Activated CD8-positive, alpha-beta T cell treated with anti-CD3 and anti-CD28 coated beads for 36 hours (primary cell): ENCODE measurements at regions of chr9 and their contacts with region 1.

Region 1: DNA sequence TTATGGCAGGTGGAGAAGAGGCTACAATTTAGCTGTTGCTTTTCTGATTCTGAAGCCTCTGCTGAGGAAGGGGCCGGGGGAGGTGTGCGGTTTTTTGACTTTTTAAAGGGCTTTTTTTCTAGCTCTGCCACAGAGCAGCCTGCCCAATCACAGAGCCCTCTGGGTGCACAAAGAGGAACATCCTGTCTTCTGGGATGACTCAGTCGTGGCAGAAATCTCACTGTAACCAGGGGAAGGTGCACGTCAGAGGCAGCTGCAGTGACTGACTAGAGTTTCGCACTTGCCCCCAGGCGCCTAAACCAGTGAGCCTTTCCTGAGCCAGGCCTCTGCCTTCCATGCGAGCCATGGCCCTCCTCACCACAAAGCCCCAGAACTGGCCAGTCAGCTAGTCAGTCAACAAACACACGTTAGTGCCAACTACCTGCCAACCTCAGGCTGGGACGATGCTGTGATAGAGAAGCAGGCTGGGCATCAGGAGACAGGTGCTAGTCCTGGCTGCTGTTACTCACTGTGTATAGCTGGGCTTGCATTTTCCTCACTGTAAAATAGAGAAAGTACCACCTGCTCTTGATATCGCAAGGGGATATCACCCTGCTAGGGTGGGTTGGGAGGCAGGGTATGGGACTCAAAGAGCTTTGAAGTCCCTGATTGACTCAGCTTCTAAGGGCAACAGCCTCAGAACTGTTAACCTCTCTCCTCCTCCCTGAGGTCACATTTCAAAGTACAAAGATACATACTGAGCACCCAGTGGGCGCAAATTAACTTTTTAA is 2.2 kb downstream of the AKNA start:
- DNase-seq: peak; percentile 96
- ATAC-seq: peak; percentile 74
- H3K4me3 Mint-ChIP-seq: peak overlapping the region; percentile 84
- H3K27ac Mint-ChIP-seq: peak overlapping the region; percentile 94
- H3K4me1 Mint-ChIP-seq: peaks cover 34% of the 10 kb centered on the region
- H3K27me3 Mint-ChIP-seq: no peaks in the 10 kb centered on the region
- CTCF ChIP-seq: no peak

Region 2: DNA sequence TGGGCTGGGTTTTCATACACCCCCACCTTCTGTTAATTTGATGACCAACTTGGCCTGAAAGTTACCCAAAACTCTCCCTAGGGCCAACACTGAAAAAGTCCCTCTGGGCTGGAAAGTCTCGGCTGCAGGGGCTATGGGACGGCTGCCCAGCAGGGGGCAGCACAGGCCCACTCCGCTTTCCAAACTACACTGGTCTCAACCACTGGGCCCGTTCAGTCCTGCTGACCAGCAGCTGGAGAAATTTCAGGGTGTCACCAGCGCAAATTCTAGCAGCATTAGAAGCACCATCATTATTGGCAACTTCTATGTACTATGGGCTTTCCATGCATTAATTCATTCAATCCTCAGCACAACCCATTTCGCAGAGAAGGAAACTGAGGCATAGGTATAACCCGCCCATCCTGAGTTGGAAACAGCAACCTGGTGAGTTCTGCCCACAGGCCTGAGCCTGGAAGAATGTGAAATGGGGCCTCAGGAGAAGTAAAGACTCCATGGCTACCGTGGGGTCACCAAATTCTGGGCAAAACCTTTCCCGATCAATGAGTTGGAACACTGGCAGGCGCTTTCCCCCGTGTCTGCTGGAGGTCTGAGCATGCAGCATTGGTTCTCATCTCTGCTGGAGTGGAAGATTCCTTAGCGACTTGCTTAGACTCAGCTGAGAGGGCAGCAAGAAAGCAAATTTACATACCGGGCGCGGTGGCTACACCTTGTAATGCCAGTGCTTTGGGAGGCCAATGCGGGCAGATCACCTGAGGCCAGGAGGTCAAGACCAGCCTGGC is 46.3 kb before region 1 on chr9:
- CTCF ChIA-PET with region 1: interaction called, 98 read pairs
- POLR2A ChIA-PET with region 1: interaction called, 277 read pairs
- intact Hi-C with region 1: no loop called
- DNase-seq: peak; percentile 71
- ATAC-seq: peak; percentile 70
- H3K4me3 Mint-ChIP-seq: no peak overlapping the region
- H3K27ac Mint-ChIP-seq: peak overlapping the region; percentile 49
- H3K4me1 Mint-ChIP-seq: peaks cover 34% of the 10 kb centered on the region
- H3K27me3 Mint-ChIP-seq: no peaks in the 10 kb centered on the region
- CTCF ChIP-seq: peak; percentile 84

Region 3: GRCh38 chr9:114348906-114349482 is 36.6 kb before region 1 on chr9:
- CTCF ChIA-PET with region 1: interaction called, 98 read pairs
- POLR2A ChIA-PET with region 1: interaction called, 277 read pairs
- intact Hi-C with region 1: loop called (anchors 2 kb)
- DNase-seq: peak; percentile 99
- ATAC-seq: peak; percentile 89
- H3K4me3 Mint-ChIP-seq: peak overlapping the region; percentile 66
- H3K27ac Mint-ChIP-seq: peak overlapping the region; percentile 100
- H3K4me1 Mint-ChIP-seq: peaks cover 66% of the 10 kb centered on the region
- H3K27me3 Mint-ChIP-seq: no peaks in the 10 kb centered on the region
- CTCF ChIP-seq: no peak

Region 4: GRCh38 chr9:114366334-114367128 is 19.1 kb before region 1 on chr9:
- CTCF ChIA-PET with region 1: interaction called, 72 read pairs
- POLR2A ChIA-PET with region 1: interaction called, 351 read pairs
- intact Hi-C with region 1: no loop called
- DNase-seq: peak; percentile 59
- ATAC-seq: peak; percentile 50
- H3K4me3 Mint-ChIP-seq: peak overlapping the region; percentile 38
- H3K27ac Mint-ChIP-seq: peak overlapping the region; percentile 93
- H3K4me1 Mint-ChIP-seq: peaks cover 86% of the 10 kb centered on the region
- H3K27me3 Mint-ChIP-seq: no peaks in the 10 kb centered on the region
- CTCF ChIP-seq: no peak

Region 5: DNA sequence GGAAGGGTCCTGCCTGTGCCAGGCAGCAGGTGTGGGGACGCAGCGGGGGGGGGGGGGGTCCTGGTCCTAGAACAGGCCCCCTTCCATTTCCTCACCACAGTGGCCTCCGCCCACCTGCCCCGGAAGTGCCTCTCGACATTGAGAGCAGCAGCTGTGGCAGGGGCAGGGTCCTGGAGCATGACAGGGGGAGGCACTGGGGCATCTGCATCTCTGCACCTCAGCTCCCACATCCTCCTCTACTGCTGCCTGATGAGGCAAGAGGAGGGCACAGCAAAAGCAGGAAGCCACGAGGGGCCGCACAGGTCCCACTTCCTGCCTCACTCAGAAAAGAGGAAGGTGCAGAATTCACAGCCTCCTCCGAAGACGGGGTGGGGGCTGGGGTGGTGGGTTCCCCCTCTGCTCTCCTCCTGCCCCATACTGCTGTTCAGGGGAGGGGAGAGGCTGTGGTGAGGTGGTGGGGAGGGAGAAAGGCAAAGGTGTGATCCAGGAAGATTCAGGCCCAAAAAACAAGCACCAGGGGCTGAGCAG is 12.6 kb before region 1 on chr9:
- CTCF ChIA-PET with region 1: interaction called, 72 read pairs
- POLR2A ChIA-PET with region 1: interaction called, 351 read pairs
- intact Hi-C with region 1: loop called (anchors 2 kb)
- DNase-seq: peak; percentile 96
- ATAC-seq: peak; percentile 84
- H3K4me3 Mint-ChIP-seq: peak overlapping the region; percentile 72
- H3K27ac Mint-ChIP-seq: peak overlapping the region; percentile 89
- H3K4me1 Mint-ChIP-seq: peaks cover 90% of the 10 kb centered on the region
- H3K27me3 Mint-ChIP-seq: no peaks in the 10 kb centered on the region
- CTCF ChIP-seq: no peak

Region 6: DNA sequence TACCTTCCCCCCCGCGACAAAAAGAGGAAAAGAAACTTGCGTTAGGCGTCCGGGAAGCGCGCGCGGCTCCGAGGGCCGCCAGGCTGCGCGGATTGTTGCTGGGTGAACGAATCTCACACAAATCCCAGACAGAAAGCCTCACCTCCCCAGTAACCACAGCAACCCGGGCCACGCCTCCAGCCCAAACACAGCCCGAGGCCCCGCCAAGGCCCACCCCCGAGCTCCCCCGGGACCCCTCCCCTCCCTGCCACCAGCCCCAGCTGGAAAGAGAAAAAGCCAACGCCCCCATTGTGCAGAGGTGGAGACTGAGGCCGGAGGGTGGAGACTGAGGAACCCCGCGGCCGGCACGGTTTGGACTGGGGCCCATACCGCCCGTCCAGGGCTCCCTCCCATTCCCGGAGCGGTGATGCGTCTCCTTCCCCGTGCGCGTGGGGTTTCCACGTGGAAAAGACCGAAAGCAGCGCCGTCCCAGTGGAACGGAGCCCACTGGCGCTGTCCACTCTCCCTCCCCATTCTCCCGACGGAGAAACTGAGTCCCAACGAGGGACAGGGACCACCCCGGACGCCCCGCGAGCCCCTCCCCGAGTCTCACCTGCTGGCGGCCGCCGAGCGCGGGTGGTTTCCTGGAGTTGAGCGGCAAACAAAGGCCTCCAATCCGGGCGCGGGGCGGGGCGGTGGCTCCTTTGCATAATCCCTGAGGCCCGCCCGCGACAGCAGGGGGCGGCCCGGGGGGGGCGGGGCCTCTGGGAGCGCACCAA is 12.4 kb after region 1 on chr9:
- CTCF ChIA-PET with region 1: interaction called, 8 read pairs
- POLR2A ChIA-PET with region 1: interaction called, 50 read pairs
- intact Hi-C with region 1: no loop called
- DNase-seq: peak; percentile 99
- ATAC-seq: peak; percentile 91
- H3K4me3 Mint-ChIP-seq: peak overlapping the region; percentile 89
- H3K27ac Mint-ChIP-seq: peak overlapping the region; percentile 65
- H3K4me1 Mint-ChIP-seq: peaks cover 42% of the 10 kb centered on the region
- H3K27me3 Mint-ChIP-seq: no peaks in the 10 kb centered on the region
- CTCF ChIP-seq: no peak

Region 7: DNA sequence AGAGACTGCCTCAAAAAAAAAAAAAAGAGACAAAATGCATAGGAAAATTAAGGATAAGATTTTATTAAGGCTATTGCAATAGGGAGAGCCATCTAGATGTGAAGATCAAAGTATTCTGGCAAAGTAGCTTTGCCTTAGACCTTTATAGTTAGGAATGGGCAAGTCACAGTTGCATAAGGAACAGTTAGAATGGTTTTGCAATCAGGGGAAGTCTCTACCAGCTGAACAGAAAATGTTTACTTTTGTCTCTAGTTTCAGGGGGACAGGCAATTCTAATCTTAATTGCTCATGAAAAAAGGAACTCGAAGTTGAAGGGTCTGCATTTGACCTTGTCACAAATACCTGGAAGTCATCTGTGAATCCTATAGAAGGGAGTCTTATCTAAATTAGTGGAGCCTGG is 188.8 kb after region 1 on chr9:
- CTCF ChIA-PET with region 1: no interaction called
- POLR2A ChIA-PET with region 1: no interaction called
- intact Hi-C with region 1: no loop called
- DNase-seq: no peak
- ATAC-seq: no peak
- H3K4me3 Mint-ChIP-seq: no peak overlapping the region
- H3K27ac Mint-ChIP-seq: no peak overlapping the region
- H3K4me1 Mint-ChIP-seq: no peaks in the 10 kb centered on the region
- H3K27me3 Mint-ChIP-seq: no peaks in the 10 kb centered on the region
- CTCF ChIP-seq: no peak